Thyroid gland (tissue), 4 donors: ENCODE measurements at regions of chr12 and their contacts with region 1.

Region 1: GRCh38 chr12:15276088-15276698 is 46.1 kb upstream of the PTPRO start:
- DNase-seq: peak in 1 of 2 donors; percentile 18
- H3K4me3 ChIP-seq: no peak overlapping the region
- H3K27ac ChIP-seq: no peak overlapping the region
- H3K4me1 ChIP-seq: peaks cover 5 to 9% of the 10 kb centered on the region in 2 donors
- H3K27me3 ChIP-seq: no peaks in the 10 kb centered on the region
- CTCF ChIP-seq: peak; percentile 37 to 73 (median 60)
- POLR2A ChIP-seq: no peak

Region 2: DNA sequence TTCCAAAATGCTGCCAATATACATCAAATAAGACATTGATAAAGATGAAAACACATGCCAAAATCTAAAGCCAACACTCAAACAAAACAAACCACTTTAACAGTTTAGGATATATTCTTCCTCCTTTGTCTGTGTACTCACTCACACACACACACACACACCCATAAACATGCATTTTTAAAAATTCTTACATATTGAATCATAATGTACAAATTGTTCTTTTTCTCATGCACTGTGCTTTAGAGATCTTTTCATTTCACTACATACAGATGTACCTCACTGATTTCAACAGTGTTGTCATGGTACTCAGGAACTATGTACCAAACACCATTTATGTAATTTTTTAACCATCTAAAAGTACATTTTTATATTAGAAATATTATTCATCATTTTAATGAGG is 45.4 kb before region 1 on chr12:
- intact Hi-C with region 1: loop called (anchors 5 kb)
- DNase-seq: no peak
- H3K4me3 ChIP-seq: no peak overlapping the region
- H3K27ac ChIP-seq: no peak overlapping the region
- H3K4me1 ChIP-seq: no peaks in the 10 kb centered on the region
- H3K27me3 ChIP-seq: no peaks in the 10 kb centered on the region
- CTCF ChIP-seq: no peak
- POLR2A ChIP-seq: no peak

Region 3: GRCh38 chr12:15584366-15585041 is 308.3 kb after region 1 on chr12:
- intact Hi-C with region 1: loop called (anchors 10 kb)
- DNase-seq: peak in 1 of 2 donors; percentile 10
- H3K4me3 ChIP-seq: no peak overlapping the region
- H3K27ac ChIP-seq: no peak overlapping the region
- H3K4me1 ChIP-seq: no peaks in the 10 kb centered on the region
- H3K27me3 ChIP-seq: no peaks in the 10 kb centered on the region
- CTCF ChIP-seq: peak in 5 of 6 experiments; percentile 24 to 74 (median 54)
- POLR2A ChIP-seq: no peak

Region 4: GRCh38 chr12:15856097-15856982 is 580.1 kb after region 1 on chr12:
- intact Hi-C with region 1: loop called (anchors 10 kb)
- DNase-seq: peak; percentile 30 to 34
- H3K4me3 ChIP-seq: no peak overlapping the region
- H3K27ac ChIP-seq: no peak overlapping the region
- H3K4me1 ChIP-seq: peaks cover 0 to 7% of the 10 kb centered on the region in 2 donors
- H3K27me3 ChIP-seq: no peaks in the 10 kb centered on the region
- CTCF ChIP-seq: peak; percentile 37 to 94 (median 76)
- POLR2A ChIP-seq: no peak